Activated T-helper 2 cell treated with anti-CD3 and anti-CD28 coated beads, Interferon-gamma antibody, Interleukin-2, Interleukin-4, amounts not matched to agents 10 μg/mL and 5 μg/mL and 100 μg/mL, durations not matched to agents 14 hours and 24 hours and 36 hours (primary cell): ENCODE measurements at regions of chr2 and their contacts with region 1.

Region 1: GRCh38 chr2:48369971-48370370 is 160.0 kb upstream of the STON1 start:
- DNase-seq: no peak
- H3K4me3 Mint-ChIP-seq: no peak overlapping the region
- H3K27ac Mint-ChIP-seq: no peak overlapping the region
- H3K4me1 Mint-ChIP-seq: peaks cover 20% of the 10 kb centered on the region
- H3K27me3 Mint-ChIP-seq: no peaks in the 10 kb centered on the region

Region 2: DNA sequence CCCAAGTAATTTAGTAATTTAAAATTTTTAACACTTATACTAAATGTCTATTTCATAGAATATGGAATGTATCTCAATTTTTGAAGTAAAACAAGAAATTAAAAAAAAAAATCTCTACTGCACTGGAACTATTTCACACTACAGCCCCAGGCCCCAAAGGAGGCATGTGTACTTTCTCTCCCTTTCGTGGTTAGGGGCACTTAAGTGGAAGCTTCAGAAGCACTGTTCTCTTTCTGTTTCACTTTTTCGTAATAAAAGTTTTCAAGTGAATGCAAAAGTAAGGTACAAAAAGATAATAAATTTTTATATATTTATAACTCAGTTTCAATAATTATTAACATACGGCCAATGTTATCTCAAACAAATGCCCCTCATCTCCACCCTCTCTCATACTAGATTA is 36.1 kb after region 1 on chr2:
- intact Hi-C with region 1: loop called (anchors 5 kb)
- DNase-seq: no peak
- H3K4me3 Mint-ChIP-seq: no peak overlapping the region
- H3K27ac Mint-ChIP-seq: peak overlapping the region; percentile 53
- H3K4me1 Mint-ChIP-seq: peaks cover 26% of the 10 kb centered on the region
- H3K27me3 Mint-ChIP-seq: no peaks in the 10 kb centered on the region